GM18951 (cell line): ENCODE measurements at regions of chr7 and their contacts with region 1.

Region 1: GRCh38 chr7:47179812-47180515 is 401.9 kb downstream of the TNS3 start:
- POLR2A ChIP-seq: no peak

Region 2: DNA sequence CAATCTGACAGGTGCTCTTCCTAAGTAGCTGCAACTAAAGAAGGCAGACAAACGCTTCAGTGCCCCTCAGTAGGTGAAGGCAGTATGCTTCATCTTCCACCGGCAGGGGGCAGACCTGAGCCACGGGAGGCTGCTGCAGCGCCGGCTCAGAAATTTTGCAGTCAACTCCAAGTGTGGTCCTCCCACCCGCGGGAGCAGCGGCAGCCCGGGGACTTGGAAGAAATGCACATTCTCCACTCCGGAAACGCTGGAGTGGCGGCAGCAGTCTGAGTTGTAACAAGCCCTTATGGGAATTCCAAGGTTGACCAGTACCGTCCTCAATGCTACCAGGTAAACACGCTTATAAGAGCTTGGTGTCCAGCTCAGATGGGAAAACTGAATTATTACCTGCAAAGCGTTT is 1262.3 kb before region 1 on chr7:
- in situ Hi-C with region 1: loop called (anchors 25 kb)
- POLR2A ChIP-seq: no peak

Region 3: GRCh38 chr7:47074702-47075153 is 105.2 kb before region 1 on chr7:
- in situ Hi-C with region 1: no loop called
- POLR2A ChIP-seq: no peak

Region 4: DNA sequence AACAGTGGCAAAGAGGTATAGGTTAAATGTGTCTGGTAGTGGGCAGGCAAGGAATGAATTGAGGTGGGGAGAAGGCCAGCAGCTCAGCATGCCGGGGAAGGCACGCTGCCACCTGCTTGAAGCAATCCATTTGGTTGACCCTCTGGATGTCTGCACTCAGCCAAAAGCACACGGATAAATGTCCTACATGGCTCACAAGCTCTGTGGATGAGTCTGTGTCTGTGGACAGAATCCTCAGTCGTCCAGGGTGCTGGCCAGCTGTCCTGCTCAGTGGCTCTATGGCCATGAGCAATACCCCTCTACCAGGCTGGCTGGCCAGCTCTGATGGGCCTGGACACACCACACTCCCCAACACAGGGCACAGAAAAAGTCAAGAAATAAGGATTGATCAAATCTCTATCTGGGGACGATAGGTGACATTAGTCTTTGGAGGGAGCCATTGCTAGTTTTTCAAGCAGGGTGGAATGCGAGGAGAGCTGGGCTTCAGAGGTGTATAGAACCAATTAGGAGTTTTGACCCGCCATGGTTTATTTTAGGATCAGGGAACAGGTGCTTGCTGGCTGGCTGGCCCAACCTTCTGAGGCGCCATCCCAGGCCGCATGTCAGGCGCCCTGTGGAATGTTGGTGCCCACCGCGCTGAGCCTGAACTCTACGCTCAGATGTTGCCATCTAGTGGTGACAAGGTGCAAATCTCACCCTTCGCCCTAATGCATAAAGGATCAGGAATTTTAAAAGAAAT is 91.5 kb before region 1 on chr7:
- in situ Hi-C with region 1: loop called (anchors 10 kb)
- POLR2A ChIP-seq: no peak

Region 5: DNA sequence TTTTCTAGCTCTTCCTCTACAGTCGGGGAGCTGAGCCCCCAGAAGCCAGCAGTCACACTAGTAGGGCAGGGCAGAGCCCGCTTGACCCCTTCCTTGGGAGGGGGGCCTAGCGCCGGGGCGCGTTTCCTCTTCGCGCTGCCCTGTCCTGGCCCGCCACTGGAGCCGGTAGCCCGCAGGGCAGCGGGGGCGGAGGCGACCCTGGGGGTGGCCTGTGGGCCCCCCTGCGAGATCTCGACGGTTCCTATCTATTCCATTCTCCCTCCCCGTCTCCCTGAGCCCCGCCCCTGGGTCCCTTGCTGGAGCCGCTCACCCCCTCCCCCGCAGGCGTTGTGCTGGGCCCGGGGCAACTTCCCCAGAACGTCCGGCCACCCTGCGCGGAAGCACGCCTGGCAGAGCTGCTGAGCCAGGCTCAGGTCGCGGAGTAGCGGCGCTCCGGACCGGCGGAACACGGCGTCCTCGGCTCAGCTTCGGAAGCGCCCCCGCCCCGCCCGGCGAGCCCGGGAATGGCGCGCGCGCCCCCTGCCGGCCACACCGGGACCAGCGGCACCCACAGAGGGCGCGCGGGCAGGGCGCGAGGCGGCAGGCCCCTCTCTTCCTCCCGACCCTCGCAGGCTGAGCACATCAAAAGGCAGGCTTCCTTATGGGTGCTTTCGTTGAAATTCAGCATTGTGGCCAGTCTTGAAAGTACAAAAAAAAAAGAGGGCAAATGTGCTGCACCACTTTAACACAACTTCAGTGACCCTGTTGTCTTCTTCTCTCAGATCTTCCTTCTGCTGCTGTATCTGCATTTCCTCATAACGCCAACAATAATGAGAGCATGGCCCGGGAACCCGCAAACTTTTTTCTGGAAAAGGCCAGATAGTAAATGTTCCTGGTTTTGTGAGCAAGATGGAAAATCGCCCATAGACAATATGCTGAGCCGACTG is 74.4 kb after region 1 on chr7:
- in situ Hi-C with region 1: loop called (anchors 10 kb)
- POLR2A ChIP-seq: peak; percentile 39

Region 6: DNA sequence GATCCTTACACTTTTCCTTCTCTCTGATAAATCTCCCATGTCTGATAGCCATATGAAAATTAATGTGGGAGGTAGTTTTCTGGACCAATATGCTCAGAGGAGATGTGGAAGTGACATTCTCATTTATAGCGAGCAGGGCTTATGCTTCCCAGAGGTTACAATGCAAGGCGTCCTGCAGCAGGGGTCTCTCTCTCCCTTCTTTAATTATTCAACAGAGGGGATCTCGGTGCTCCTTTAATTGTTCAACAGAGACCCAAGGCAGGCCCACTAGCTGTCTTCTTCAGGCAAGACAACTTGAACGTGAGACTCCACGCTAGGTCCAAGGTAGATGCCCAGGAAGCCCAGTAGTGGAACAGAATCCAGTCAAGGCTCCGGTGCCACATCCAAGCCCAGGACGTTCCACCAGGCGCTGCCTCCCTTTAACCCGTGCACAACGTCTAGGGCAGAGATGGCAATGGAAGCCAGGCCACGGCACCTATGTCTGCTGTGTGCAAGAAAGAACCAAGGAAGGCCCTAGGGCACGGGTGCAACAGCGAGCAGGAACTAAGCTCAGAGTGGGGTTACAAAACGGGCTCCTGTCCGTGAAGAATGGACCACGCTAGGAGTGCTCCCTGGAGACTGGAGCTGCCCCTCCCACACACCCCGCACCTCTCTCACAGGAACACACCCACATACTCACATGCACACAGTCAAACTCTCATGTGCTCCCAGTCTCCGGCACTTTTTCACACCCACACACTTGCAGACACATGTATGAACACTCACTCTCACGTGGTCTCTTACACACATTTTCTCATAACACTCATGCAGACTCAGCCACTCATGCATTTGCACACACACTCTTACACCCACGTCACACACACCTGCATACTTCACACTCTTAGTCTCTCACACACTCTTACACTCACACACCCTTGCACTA is 171.5 kb after region 1 on chr7:
- in situ Hi-C with region 1: no loop called
- POLR2A ChIP-seq: no peak